A549 (cell line): ENCODE measurements at regions of chr11 and their contacts with region 1.

Region 1: GRCh38 chr11:12693479-12694181 is 19.4 kb downstream of the TEAD1 start:
- DNase-seq: peak; percentile 73 to 83
- ATAC-seq: peak; percentile 74 to 79
- H3K4me3 ChIP-seq: peak overlapping the region; percentile 31
- H3K27ac ChIP-seq: peak overlapping the region; percentile 92 to 94
- H3K4me1 ChIP-seq: peaks cover 93% of the 10 kb centered on the region
- CTCF ChIP-seq: no peak
- EP300 ChIP-seq: peak in 1 of 2 experiments; percentile 36; a peak in 1 of 5 replicates
- POLR2A ChIP-seq: 0 out of 2 replicates have a peak, but pooled peaks have one; percentile 14
- RAD21 ChIP-seq: peak in 1 of 2 experiments; percentile 15; a peak in 1 of 5 replicates

Region 2: DNA sequence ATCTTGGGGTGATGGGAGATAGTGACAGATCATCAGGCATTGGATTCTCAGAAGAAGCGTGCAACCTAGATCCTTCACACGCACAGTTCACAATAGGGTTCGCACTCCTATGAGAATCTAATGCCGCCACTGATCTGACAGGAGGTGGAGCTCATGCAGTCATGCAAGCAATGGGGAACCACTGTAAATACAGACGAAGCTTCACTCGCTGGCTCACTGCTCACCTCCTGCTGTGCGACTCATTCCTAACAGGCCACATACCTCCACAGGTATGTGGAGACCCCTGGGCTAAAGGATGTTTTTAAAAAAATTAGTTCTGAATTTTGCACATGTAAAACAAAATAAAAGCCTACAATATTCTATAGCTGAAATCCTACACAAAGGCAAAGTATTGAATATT is 39.9 kb before region 1 on chr11:
- CTCF ChIA-PET with region 1: no interaction called
- POLR2A ChIA-PET with region 1: no interaction called
- DNase-seq: no peak
- ATAC-seq: no peak
- H3K4me3 ChIP-seq: no peak overlapping the region
- H3K27ac ChIP-seq: no peak overlapping the region
- H3K4me1 ChIP-seq: no peaks in the 10 kb centered on the region
- CTCF ChIP-seq: no peak
- EP300 ChIP-seq: no peak
- POLR2A ChIP-seq: no peak
- RAD21 ChIP-seq: no peak

Region 3: DNA sequence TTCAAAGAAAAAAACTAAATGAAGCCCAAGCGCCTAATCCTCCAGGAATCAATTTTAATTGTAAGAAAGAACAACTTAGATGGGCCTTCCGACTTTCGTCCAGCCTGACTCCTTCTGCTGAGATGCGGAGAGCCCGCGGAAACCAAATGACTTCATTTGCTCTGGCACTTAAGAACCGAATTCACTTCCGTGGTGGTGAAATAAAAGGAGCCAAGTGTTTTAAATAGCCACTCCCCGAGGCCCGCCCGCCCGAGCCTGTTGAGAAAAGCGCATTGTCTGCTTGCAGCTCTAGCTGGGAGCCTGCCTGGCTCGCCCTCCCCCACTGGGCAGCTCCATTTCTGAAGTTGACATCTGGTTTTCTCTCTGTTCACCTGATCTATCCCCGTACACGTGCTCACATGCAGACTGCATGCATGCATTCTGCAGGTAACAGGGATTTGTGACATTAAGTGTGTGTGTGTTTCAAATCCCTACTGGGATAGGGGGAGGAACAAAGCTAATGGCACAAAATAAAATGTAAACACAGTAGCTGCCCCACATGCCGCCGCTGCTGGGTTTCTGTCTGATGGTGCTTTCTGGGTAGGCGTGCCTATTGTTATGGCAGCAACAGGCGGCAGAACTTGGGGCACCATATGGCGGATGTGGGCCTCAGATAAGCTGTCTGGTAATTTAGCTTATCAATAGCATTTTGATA is 13.2 kb before region 1 on chr11:
- CTCF ChIA-PET with region 1: interaction called, 8 read pairs
- POLR2A ChIA-PET with region 1: interaction called, 25 read pairs
- DNase-seq: peak in 1 of 2 experiments; percentile 92
- ATAC-seq: peak; percentile 72 to 74
- H3K4me3 ChIP-seq: peak overlapping the region; percentile 90
- H3K27ac ChIP-seq: peak overlapping the region; percentile 92 to 98
- H3K4me1 ChIP-seq: peaks cover 73% of the 10 kb centered on the region
- CTCF ChIP-seq: no peak
- EP300 ChIP-seq: no peak
- POLR2A ChIP-seq: peak; percentile 38; the same call in 1 of the 2 replicates
- RAD21 ChIP-seq: no peak; a peak in 1 of 5 replicates

Region 4: GRCh38 chr11:12793065-12793464 is 99.4 kb after region 1 on chr11:
- CTCF ChIA-PET with region 1: no interaction called
- POLR2A ChIA-PET with region 1: no interaction called
- DNase-seq: no peak
- ATAC-seq: no peak
- H3K4me3 ChIP-seq: no peak overlapping the region
- H3K27ac ChIP-seq: no peak overlapping the region
- H3K4me1 ChIP-seq: peaks cover 55% of the 10 kb centered on the region
- CTCF ChIP-seq: no peak
- EP300 ChIP-seq: no peak
- POLR2A ChIP-seq: no peak
- RAD21 ChIP-seq: no peak